ENCODE measurements at regions of chr19 and their contacts with region 1.

Region 1: GRCh38 chr19:13833330-13834243 is 38.3 kb downstream of the ZSWIM4 start:
- DNase-seq: peak; percentile 95 to 97
- ATAC-seq: peak; percentile 85
- H3K4me3 ChIP-seq: no peak overlapping the region
- H3K27ac ChIP-seq: peak overlapping the region; percentile 7 to 76
- H3K4me1 ChIP-seq: no peaks in the 10 kb centered on the region
- H3K27me3 ChIP-seq: no peaks in the 10 kb centered on the region

Region 2: GRCh38 chr19:13796301-13797057 is 37.1 kb before region 1 on chr19:
- intact Hi-C with region 1: loop called in 1 of 2 experiments (anchors 2 kb)
- DNase-seq: peak; percentile 91
- ATAC-seq: peak; percentile 50
- H3K4me3 ChIP-seq: peak overlapping the region; percentile 8 to 61
- H3K27ac ChIP-seq: peak overlapping the region in 1 of 2 donors; percentile 95
- H3K4me1 ChIP-seq: peaks cover 0 to 2% of the 10 kb centered on the region in 2 donors
- H3K27me3 ChIP-seq: no peaks in the 10 kb centered on the region

Region 3: GRCh38 chr19:13942023-13942684 is 108.6 kb after region 1 on chr19:
- intact Hi-C with region 1: no loop called
- DNase-seq: no peak
- ATAC-seq: no peak
- H3K4me3 ChIP-seq: no peak overlapping the region
- H3K27ac ChIP-seq: no peak overlapping the region
- H3K4me1 ChIP-seq: no peaks in the 10 kb centered on the region
- H3K27me3 ChIP-seq: no peaks in the 10 kb centered on the region

Region 4: GRCh38 chr19:14250870-14251269 is 417.3 kb after region 1 on chr19:
- intact Hi-C with region 1: no loop called
- DNase-seq: no peak
- ATAC-seq: no peak
- H3K4me3 ChIP-seq: no peak overlapping the region
- H3K27ac ChIP-seq: no peak overlapping the region
- H3K4me1 ChIP-seq: no peaks in the 10 kb centered on the region
- H3K27me3 ChIP-seq: no peaks in the 10 kb centered on the region

Measured in aorta (tissue), 5 donors.